ENCODE measurements at regions of chr3 and their contacts with region 1.

Region 1: GRCh38 chr3:170307671-170308403 is 49.7 kb upstream of the SKIL start:
- DNase-seq: no peak
- ATAC-seq: no peak
- H3K4me3 Mint-ChIP-seq: no peak overlapping the region
- H3K27ac Mint-ChIP-seq: peak overlapping the region; percentile 55
- H3K4me1 Mint-ChIP-seq: peaks cover 21% of the 10 kb centered on the region
- H3K27me3 Mint-ChIP-seq: no peaks in the 10 kb centered on the region
- CTCF ChIP-seq: no peak

Region 2: GRCh38 chr3:170324962-170325361 is 17.1 kb after region 1 on chr3:
- CTCF ChIA-PET with region 1: interaction called, 16 read pairs
- POLR2A ChIA-PET with region 1: no interaction called
- DNase-seq: no peak
- ATAC-seq: peak; percentile 79
- H3K4me3 Mint-ChIP-seq: no peak overlapping the region
- H3K27ac Mint-ChIP-seq: no peak overlapping the region
- H3K4me1 Mint-ChIP-seq: peaks cover 44% of the 10 kb centered on the region
- H3K27me3 Mint-ChIP-seq: peaks cover 21% of the 10 kb centered on the region
- CTCF ChIP-seq: no peak

Region 3: GRCh38 chr3:170357176-170357919 is 49.5 kb after region 1 on chr3 and contains the start of gene SKIL:
- CTCF ChIA-PET with region 1: interaction called, 19 read pairs
- POLR2A ChIA-PET with region 1: no interaction called
- DNase-seq: peak; percentile 96
- ATAC-seq: peak; percentile 48
- H3K4me3 Mint-ChIP-seq: peak within 1 kb of the TSS; percentile 94
- H3K27ac Mint-ChIP-seq: peak within 1 kb of the TSS; percentile 98
- H3K4me1 Mint-ChIP-seq: peaks cover 57% of the 10 kb centered on the region
- H3K27me3 Mint-ChIP-seq: no peaks in the 10 kb centered on the region
- CTCF ChIP-seq: no peak
- total RNA-seq, gene SKIL: 181 to 190 TPM (median 188 TPM) in 3 replicates

Measured in WTC11 (cell line).